ENCODE measurements at regions of chr16 and their contacts with region 1.

Region 1: DNA sequence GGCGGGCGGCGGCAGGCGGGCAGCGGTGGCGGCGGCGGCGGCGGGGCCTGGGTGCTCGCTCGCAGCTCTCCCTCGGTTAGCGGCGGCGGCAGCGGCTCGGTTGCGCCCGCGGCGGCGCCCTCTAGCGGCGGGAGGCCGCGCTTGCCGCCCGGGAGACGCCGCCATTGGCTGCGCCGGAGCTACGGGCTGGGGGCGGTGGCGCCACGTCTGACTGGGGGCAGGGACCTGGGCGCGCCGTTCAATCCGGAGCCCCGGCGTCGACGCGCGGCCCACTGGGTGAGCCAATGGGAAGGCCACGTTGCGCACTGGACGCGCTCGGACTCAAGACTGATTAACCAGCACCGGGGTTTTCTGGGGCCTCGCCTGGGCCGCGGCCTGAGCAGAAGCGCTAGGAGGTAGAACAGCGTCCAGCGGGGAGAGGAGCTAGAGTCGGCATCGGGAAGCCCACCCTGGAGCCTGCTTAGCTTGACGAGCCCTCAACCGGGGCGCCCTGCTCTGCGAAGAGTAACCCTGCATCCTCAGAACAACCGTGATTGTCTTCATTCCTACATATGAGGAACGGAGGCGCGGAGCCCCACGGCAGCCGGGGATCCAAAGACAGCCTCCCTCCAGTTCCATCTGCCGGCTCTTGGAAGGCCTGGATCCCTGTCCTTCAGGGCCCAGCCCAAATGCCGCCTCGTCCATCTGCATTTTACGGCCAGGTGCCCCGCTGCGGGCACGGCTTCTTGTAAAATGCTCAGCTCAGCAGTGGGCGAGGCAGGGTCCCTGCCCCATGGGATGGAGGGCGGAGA is at the start of gene ZC3H7A:
- DNase-seq: peak; percentile 95
- ATAC-seq: peak; percentile 99
- H3K4me3 Mint-ChIP-seq: peak within 1 kb of the TSS; percentile 86
- H3K27ac Mint-ChIP-seq: peak within 1 kb of the TSS; percentile 96
- H3K4me1 Mint-ChIP-seq: peaks cover 35% of the 10 kb centered on the region
- H3K27me3 Mint-ChIP-seq: no peaks in the 10 kb centered on the region
- CTCF ChIP-seq: peak; percentile 90
- total RNA-seq, gene ZC3H7A: 39.9 to 45.9 TPM (median 43.0 TPM) in 3 replicates

Region 2: GRCh38 chr16:11706180-11706742 is 91.1 kb before region 1 on chr16:
- CTCF ChIA-PET with region 1: no interaction called
- POLR2A ChIA-PET with region 1: no interaction called
- DNase-seq: no peak
- ATAC-seq: no peak
- H3K4me3 Mint-ChIP-seq: no peak overlapping the region
- H3K27ac Mint-ChIP-seq: no peak overlapping the region
- H3K4me1 Mint-ChIP-seq: no peaks in the 10 kb centered on the region
- H3K27me3 Mint-ChIP-seq: no peaks in the 10 kb centered on the region
- CTCF ChIP-seq: no peak

Region 3: GRCh38 chr16:11742539-11743307 is 54.6 kb before region 1 on chr16 and contains the start of gene TXNDC11:
- CTCF ChIA-PET with region 1: interaction called, 21 read pairs
- POLR2A ChIA-PET with region 1: interaction called, 12 read pairs
- DNase-seq: peak; percentile 97
- ATAC-seq: peak; percentile 96
- H3K4me3 Mint-ChIP-seq: peak within 1 kb of the TSS; percentile 93
- H3K27ac Mint-ChIP-seq: peak within 1 kb of the TSS; percentile 93
- H3K4me1 Mint-ChIP-seq: peaks cover 21% of the 10 kb centered on the region
- H3K27me3 Mint-ChIP-seq: no peaks in the 10 kb centered on the region
- CTCF ChIP-seq: no peak
- total RNA-seq, gene TXNDC11: 11.1 to 11.5 TPM (median 11.4 TPM) in 3 replicates

Region 4: DNA sequence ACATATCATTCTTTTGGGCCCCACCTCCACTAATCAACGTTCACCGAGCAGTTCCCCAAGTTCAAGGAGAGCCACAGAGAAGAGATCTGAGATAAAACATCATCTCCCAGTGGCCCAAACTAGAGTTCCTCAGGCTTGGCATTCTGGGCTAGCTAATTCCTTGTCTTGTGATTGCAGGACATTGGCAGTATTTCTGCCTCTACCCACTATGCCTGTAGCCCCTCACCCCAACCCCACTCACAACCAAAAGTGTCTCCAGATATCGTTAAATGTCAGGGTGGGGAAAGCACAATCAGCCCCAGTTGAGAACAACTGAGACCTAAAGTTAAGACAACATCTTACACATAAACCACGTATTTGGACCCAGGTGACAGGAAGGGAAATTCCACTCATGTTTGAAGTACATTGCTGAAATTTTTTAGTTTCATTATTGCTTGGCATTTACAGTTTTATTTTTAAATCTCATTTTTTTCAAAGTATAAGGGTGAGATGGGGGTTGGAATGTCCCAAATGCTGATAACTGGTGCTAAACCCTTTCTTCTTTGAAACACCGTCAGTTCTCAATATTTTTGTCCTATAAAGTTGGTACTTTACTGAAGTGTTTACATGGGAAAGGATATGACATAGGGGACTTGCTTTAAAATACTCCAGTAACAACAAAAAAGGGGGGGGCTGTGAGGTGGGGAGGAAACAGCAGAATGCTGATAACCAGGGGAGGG is 13.9 kb before region 1 on chr16:
- CTCF ChIA-PET with region 1: interaction called, 27 read pairs
- POLR2A ChIA-PET with region 1: no interaction called
- DNase-seq: no peak
- ATAC-seq: no peak
- H3K4me3 Mint-ChIP-seq: no peak overlapping the region
- H3K27ac Mint-ChIP-seq: peak overlapping the region; percentile 96
- H3K4me1 Mint-ChIP-seq: peaks cover 21% of the 10 kb centered on the region
- H3K27me3 Mint-ChIP-seq: no peaks in the 10 kb centered on the region
- CTCF ChIP-seq: no peak

Region 5: GRCh38 chr16:11819798-11820197 is 22.4 kb after region 1 on chr16:
- CTCF ChIA-PET with region 1: interaction called, 15 read pairs
- POLR2A ChIA-PET with region 1: interaction called, 3 read pairs
- DNase-seq: no peak
- ATAC-seq: no peak
- H3K4me3 Mint-ChIP-seq: no peak overlapping the region
- H3K27ac Mint-ChIP-seq: no peak overlapping the region
- H3K4me1 Mint-ChIP-seq: 0 out of 2 replicates have a peak, but pooled peaks cover 4% of the 10 kb centered on the region
- H3K27me3 Mint-ChIP-seq: no peaks in the 10 kb centered on the region
- CTCF ChIP-seq: no peak

Region 6: DNA sequence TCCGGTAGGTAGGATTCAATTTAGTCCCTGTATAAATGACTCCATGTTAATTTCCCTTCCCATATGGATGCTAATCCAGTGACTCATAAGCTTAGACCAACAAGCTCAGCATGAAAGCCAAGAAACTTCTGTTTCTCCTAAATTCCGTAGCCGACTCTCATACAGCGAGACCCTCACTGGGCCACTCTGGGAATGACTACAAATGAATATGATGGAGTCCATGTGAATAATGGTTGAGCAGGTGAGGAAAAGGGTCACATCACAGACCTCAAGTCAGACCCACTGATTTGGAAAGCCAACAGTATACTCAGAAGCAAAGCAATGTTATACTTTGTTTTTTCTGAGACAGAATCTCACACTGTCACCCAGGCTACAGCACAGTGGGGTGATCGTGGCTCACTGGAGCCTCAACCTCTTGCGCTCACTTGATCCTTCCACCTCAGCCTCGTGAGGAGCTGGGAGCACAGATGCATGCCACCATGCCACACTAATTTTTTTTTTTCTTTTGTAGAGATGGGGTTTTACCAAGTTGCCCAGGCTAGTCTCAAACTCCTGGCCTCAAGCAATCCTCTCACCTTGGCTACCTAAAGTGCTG is 39.4 kb after region 1 on chr16:
- CTCF ChIA-PET with region 1: interaction called, 11 read pairs
- POLR2A ChIA-PET with region 1: interaction called, 3 read pairs
- DNase-seq: no peak
- ATAC-seq: peak; percentile 50
- H3K4me3 Mint-ChIP-seq: no peak overlapping the region
- H3K27ac Mint-ChIP-seq: peak overlapping the region; percentile 98
- H3K4me1 Mint-ChIP-seq: peaks cover 11% of the 10 kb centered on the region
- H3K27me3 Mint-ChIP-seq: no peaks in the 10 kb centered on the region; the same call in 1 of the 2 replicates
- CTCF ChIP-seq: no peak

Measured in WTC11 (cell line).